ENCODE measurements at regions of chr6 and their contacts with region 1.

Region 1: DNA sequence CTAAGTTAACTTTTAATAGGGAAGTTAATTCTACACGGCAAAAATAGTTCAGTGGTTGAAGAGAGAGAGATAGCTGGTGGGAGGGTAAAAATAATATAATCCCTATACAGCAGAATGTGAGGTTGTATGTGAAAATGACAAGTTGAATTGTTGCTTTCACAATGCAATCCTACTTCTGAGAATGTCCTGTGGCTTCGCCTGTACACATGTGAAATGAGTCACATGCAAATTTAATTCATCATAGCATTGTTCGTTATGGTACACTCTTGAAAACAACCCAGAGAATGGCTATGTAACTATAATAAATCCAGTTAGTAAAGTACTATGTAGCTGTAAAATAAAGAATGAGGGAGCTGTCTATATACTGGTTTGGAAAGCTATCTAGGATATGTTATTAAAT is 46.0 kb upstream of the HINT3 start:
- DNase-seq: no peak
- ATAC-seq: no peak
- H3K4me3 ChIP-seq: no peak overlapping the region
- H3K27ac ChIP-seq: no peak overlapping the region
- H3K4me1 ChIP-seq: no peaks in the 10 kb centered on the region
- H3K27me3 ChIP-seq: no peaks in the 10 kb centered on the region
- CTCF ChIP-seq: no peak

Region 2: GRCh38 chr6:125670568-125670967 is 240.0 kb before region 1 on chr6:
- CTCF ChIA-PET with region 1: no interaction called
- POLR2A ChIA-PET with region 1: no interaction called
- in situ Hi-C with region 1: no loop called
- intact Hi-C with region 1: no loop called
- DNase-seq: no peak
- ATAC-seq: no peak
- H3K4me3 ChIP-seq: no peak overlapping the region
- H3K27ac ChIP-seq: no peak overlapping the region
- H3K4me1 ChIP-seq: no peaks in the 10 kb centered on the region
- H3K27me3 ChIP-seq: no peaks in the 10 kb centered on the region
- CTCF ChIP-seq: no peak

Region 3: DNA sequence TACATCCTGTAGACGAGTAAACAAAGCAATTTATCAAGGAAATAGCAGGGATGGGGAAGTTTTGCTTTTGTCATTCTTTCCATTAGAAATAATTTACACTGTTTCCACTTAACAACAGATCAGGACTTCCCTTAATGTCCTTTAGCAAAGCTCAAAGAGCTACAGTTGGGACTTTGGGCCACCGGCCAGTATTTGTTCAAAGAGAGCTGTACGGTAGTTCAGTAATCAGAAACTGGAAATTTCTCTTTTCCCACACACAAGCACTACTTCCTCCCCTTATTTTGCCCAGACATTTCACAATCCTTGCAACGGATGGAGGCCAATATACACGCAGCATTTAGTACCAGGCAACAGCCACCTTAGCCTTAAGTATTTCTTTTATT is 33.9 kb after region 1 on chr6:
- CTCF ChIA-PET with region 1: no interaction called
- POLR2A ChIA-PET with region 1: interaction called, 13 read pairs
- in situ Hi-C with region 1: no loop called
- intact Hi-C with region 1: no loop called
- DNase-seq: no peak
- ATAC-seq: no peak
- H3K4me3 ChIP-seq: no peak overlapping the region
- H3K27ac ChIP-seq: no peak overlapping the region
- H3K4me1 ChIP-seq: no peaks in the 10 kb centered on the region; the same call in 1 of the 2 replicates
- H3K27me3 ChIP-seq: peaks cover 11% of the 10 kb centered on the region; the same call in 1 of the 2 replicates
- CTCF ChIP-seq: no peak